HEK293T (cell line): ENCODE measurements at regions of chr5 and their contacts with region 1.

Region 1: GRCh38 chr5:151686674-151687407 is at the start of gene SPARC:
- DNase-seq: no peak

Region 2: GRCh38 chr5:151592855-151593408 is 93.9 kb before region 1 on chr5:
- CTCF ChIA-PET with region 1: no interaction called
- POLR2A ChIA-PET with region 1: no interaction called
- DNase-seq: no peak

Region 3: GRCh38 chr5:151699071-151699901 is 12.4 kb after region 1 on chr5:
- CTCF ChIA-PET with region 1: interaction called, 8 read pairs
- POLR2A ChIA-PET with region 1: interaction called, 29 read pairs
- DNase-seq: no peak